B cell (primary cell): ENCODE measurements at regions of chr10 and their contacts with region 1.

Region 1: DNA sequence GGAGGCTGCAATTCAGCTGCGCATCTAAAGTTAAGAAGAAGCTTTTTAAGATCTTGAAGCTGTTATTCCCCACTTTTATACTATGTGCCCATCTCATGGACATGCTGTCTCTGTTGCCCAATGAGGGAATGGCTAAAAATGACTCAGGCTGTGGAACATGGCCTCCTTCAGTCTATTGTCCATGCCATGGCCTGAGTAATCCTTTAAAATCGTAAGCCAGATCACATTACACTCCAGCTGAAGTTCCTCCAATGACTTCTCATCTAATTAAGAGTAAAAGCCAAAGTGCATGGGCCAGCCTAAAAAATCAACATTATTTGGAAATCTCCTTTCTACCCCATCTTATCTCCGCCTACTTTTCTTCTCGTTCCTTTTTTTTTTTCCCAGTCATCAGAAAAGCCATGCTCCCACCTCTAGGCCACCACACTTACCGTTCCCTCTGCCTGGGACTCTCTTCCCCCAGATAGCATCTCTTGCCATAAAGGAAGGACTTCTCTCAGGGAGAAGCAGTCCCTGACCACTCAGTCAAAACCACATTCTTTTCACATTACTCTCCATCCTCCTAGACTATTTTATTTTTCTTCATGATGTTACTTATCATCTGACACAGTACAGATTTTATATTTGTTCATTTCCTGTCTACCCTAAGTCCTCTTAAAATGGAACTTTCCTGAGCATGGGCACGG is 337.4 kb downstream of the PRPF18 start:
- DNase-seq: no peak
- ATAC-seq: no peak
- H3K4me3 ChIP-seq: no peak overlapping the region
- H3K4me3 Mint-ChIP-seq: no peak overlapping the region
- H3K27ac ChIP-seq: no peak overlapping the region
- H3K27ac Mint-ChIP-seq: peak overlapping the region; percentile 3
- H3K4me1 ChIP-seq: peaks cover 15 to 17% of the 10 kb centered on the region in 2 donors
- H3K4me1 Mint-ChIP-seq: peaks cover 32% of the 10 kb centered on the region
- H3K27me3 ChIP-seq: no peaks in the 10 kb centered on the region
- H3K27me3 Mint-ChIP-seq: peaks cover 5% of the 10 kb centered on the region
- CTCF ChIP-seq: no peak

Region 2: DNA sequence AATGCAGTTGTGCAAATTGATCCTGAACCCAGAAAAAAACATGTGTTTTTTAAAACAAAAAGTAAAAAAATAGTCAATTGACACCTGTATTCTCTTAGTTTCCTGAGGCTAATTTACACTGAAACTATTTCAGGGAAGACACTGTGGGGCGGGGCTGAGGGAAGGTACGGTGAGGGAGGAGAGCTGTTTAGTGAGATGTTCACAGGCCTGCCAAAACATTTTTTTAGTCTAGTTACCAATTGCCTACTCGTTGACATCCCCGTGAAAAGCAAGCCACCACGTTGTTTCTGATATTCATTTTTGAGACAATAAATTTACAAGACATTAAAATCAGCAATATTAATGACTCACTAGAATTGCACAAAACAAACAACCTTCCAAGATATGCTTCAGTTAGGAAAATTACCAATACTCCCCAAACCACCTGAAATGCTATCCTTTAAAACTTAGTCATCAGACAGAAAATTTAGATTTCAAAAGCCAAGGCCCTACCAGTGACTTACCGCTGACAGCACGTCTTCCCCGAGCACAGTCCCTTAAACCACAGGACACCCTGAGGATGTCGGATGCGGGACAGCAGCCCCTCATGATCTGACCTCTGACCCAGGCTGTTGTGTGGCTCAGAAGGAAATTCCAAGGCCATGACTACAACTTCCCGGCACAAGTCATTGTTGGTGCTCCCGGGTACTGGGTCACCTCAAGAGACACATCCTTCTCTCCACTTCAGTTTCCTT is 58.3 kb before region 1 on chr10:
- CTCF ChIA-PET with region 1: no interaction called
- POLR2A ChIA-PET with region 1: no interaction called
- intact Hi-C with region 1: no loop called
- DNase-seq: no peak
- ATAC-seq: no peak
- H3K4me3 ChIP-seq: no peak overlapping the region
- H3K4me3 Mint-ChIP-seq: no peak overlapping the region
- H3K27ac ChIP-seq: no peak overlapping the region
- H3K27ac Mint-ChIP-seq: no peak overlapping the region
- H3K4me1 ChIP-seq: no peaks in the 10 kb centered on the region
- H3K4me1 Mint-ChIP-seq: peaks cover 9% of the 10 kb centered on the region
- H3K27me3 ChIP-seq: no peaks in the 10 kb centered on the region
- H3K27me3 Mint-ChIP-seq: peaks cover 6% of the 10 kb centered on the region
- CTCF ChIP-seq: no peak

Region 3: GRCh38 chr10:13990946-13991345 is 66.8 kb after region 1 on chr10:
- CTCF ChIA-PET with region 1: no interaction called
- POLR2A ChIA-PET with region 1: no interaction called
- intact Hi-C with region 1: loop called (anchors 10 kb)
- DNase-seq: no peak
- ATAC-seq: no peak
- H3K4me3 ChIP-seq: no peak overlapping the region
- H3K4me3 Mint-ChIP-seq: no peak overlapping the region
- H3K27ac ChIP-seq: no peak overlapping the region
- H3K27ac Mint-ChIP-seq: peak overlapping the region; percentile 59
- H3K4me1 ChIP-seq: peaks cover 25 to 27% of the 10 kb centered on the region in 2 donors
- H3K4me1 Mint-ChIP-seq: peaks cover 37% of the 10 kb centered on the region
- H3K27me3 ChIP-seq: no peaks in the 10 kb centered on the region
- H3K27me3 Mint-ChIP-seq: no peaks in the 10 kb centered on the region
- CTCF ChIP-seq: no peak